B cell (primary cell): ENCODE measurements at regions of chr16 and their contacts with region 1.

Region 1: GRCh38 chr16:88936556-88937205 is 40.3 kb downstream of the CBFA2T3 start:
- DNase-seq: peak; percentile 80
- ATAC-seq: peak; percentile 31
- H3K4me3 ChIP-seq: peak overlapping the region; percentile 35 to 69 (median 49)
- H3K4me3 Mint-ChIP-seq: peak overlapping the region; percentile 84
- H3K27ac ChIP-seq: peak overlapping the region; percentile 35 to 76
- H3K27ac Mint-ChIP-seq: peak overlapping the region; percentile 90
- H3K4me1 ChIP-seq: peaks cover 45 to 50% of the 10 kb centered on the region in 2 donors
- H3K4me1 Mint-ChIP-seq: peaks cover 48% of the 10 kb centered on the region
- H3K27me3 ChIP-seq: no peaks in the 10 kb centered on the region
- H3K27me3 Mint-ChIP-seq: no peaks in the 10 kb centered on the region
- CTCF ChIP-seq: no peak

Region 2: GRCh38 chr16:88811769-88812512 is 124.7 kb before region 1 on chr16 and contains the start of gene APRT:
- CTCF ChIA-PET with region 1: interaction called, 5 read pairs
- POLR2A ChIA-PET with region 1: no interaction called
- intact Hi-C with region 1: loop called (anchors 1 kb)
- DNase-seq: peak; percentile 97
- ATAC-seq: peak; percentile 87
- H3K4me3 ChIP-seq: peak within 1 kb of the TSS; percentile 45 to 90 (median 77)
- H3K4me3 Mint-ChIP-seq: peak within 1 kb of the TSS; percentile 98
- H3K27ac ChIP-seq: peak within 1 kb of the TSS; percentile 61 to 65
- H3K27ac Mint-ChIP-seq: peak within 1 kb of the TSS; percentile 99
- H3K4me1 ChIP-seq: peaks cover 11 to 27% of the 10 kb centered on the region in 2 donors
- H3K4me1 Mint-ChIP-seq: peaks cover 19% of the 10 kb centered on the region
- H3K27me3 ChIP-seq: no peaks in the 10 kb centered on the region
- H3K27me3 Mint-ChIP-seq: no peaks in the 10 kb centered on the region
- CTCF ChIP-seq: no peak
- total RNA-seq, gene APRT: 111 and 124 TPM in 2 replicates

Region 3: DNA sequence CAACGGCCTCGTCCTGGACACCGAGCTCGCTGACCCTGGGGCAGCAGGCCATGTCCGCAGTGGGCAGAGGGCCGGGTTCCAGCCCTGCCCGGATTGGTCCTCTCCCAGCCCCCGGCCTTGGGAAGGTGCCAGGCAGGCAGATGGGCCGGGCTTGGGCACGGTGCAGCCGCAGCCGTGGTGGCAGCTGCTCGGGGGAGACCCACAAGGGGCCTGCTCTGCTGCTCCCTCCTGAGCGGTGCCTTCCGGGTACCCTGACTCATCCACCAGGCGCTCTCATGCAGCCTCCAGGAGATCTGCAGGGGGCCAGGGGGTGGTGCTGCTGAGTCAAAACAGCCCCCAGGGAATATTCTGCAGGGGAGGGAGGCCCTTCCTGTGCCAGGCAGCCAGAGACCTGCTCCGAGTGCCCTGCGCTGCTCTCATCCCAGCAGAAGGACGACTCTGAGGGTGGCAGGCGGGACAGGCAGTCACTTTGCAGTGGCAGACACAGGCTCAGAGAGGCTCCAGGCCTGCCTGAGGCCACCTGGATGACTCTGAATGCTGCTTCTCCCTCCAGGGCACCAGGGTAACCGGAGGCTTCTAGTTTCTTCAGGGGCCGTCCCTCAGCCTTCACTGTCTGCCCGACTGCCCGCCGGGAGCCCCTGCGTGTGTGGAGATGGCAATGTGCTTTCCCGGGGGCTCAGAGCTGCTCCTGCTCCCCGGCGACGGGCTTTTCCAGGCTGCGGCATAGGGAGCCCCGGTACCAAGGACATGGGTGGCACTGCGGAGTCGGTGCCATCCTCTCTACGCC is 11.4 kb before region 1 on chr16:
- CTCF ChIA-PET with region 1: interaction called, 8 read pairs
- POLR2A ChIA-PET with region 1: interaction called, 12 read pairs
- intact Hi-C with region 1: loop called (anchors 1 kb)
- DNase-seq: peak; percentile 82
- ATAC-seq: peak; percentile 96
- H3K4me3 ChIP-seq: no peak overlapping the region
- H3K4me3 Mint-ChIP-seq: no peak overlapping the region
- H3K27ac ChIP-seq: no peak overlapping the region
- H3K27ac Mint-ChIP-seq: peak overlapping the region; percentile 78
- H3K4me1 ChIP-seq: peaks cover 51 to 63% of the 10 kb centered on the region in 2 donors
- H3K4me1 Mint-ChIP-seq: peaks cover 60% of the 10 kb centered on the region
- H3K27me3 ChIP-seq: no peaks in the 10 kb centered on the region
- H3K27me3 Mint-ChIP-seq: no peaks in the 10 kb centered on the region
- CTCF ChIP-seq: peak; percentile 66

Region 4: GRCh38 chr16:88977018-88977811 is 40.5 kb after region 1 on chr16 and contains the start of gene CBFA2T3:
- CTCF ChIA-PET with region 1: interaction called, 4 read pairs
- POLR2A ChIA-PET with region 1: interaction called, 5 read pairs
- intact Hi-C with region 1: loop called (anchors 2 kb)
- DNase-seq: peak; percentile 64
- ATAC-seq: peak; percentile 29
- H3K4me3 ChIP-seq: peak within 1 kb of the TSS; percentile 32 to 76 (median 69)
- H3K4me3 Mint-ChIP-seq: peak within 1 kb of the TSS; percentile 83
- H3K27ac ChIP-seq: peak within 1 kb of the TSS; percentile 84 to 85
- H3K27ac Mint-ChIP-seq: peak within 1 kb of the TSS; percentile 96
- H3K4me1 ChIP-seq: peaks cover 80 to 93% of the 10 kb centered on the region in 2 donors
- H3K4me1 Mint-ChIP-seq: peaks cover 87% of the 10 kb centered on the region
- H3K27me3 ChIP-seq: no peaks in the 10 kb centered on the region
- H3K27me3 Mint-ChIP-seq: no peaks in the 10 kb centered on the region
- CTCF ChIP-seq: no peak
- total RNA-seq, gene CBFA2T3: 58.3 and 58.5 TPM in 2 replicates